ENCODE measurements at regions of chr17 and their contacts with region 1.

Region 1: GRCh38 chr17:2137342-2138098 is 82.6 kb downstream of the HIC1 start:
- DNase-seq: no peak
- ATAC-seq: peak; percentile 91
- H3K4me3 Mint-ChIP-seq: no peak overlapping the region
- H3K27ac Mint-ChIP-seq: peak overlapping the region; percentile 84
- H3K4me1 Mint-ChIP-seq: peaks cover 24% of the 10 kb centered on the region
- H3K27me3 Mint-ChIP-seq: no peaks in the 10 kb centered on the region
- CTCF ChIP-seq: no peak

Region 2: GRCh38 chr17:2064980-2065785 is 72.3 kb before region 1 on chr17:
- CTCF ChIA-PET with region 1: no interaction called
- POLR2A ChIA-PET with region 1: no interaction called
- intact Hi-C with region 1: loop called (anchors 2 kb)
- DNase-seq: no peak
- ATAC-seq: no peak
- H3K4me3 Mint-ChIP-seq: peak overlapping the region; percentile 67
- H3K27ac Mint-ChIP-seq: peak overlapping the region; percentile 16
- H3K4me1 Mint-ChIP-seq: peaks cover 46% of the 10 kb centered on the region
- H3K27me3 Mint-ChIP-seq: no peaks in the 10 kb centered on the region
- CTCF ChIP-seq: no peak

Region 3: DNA sequence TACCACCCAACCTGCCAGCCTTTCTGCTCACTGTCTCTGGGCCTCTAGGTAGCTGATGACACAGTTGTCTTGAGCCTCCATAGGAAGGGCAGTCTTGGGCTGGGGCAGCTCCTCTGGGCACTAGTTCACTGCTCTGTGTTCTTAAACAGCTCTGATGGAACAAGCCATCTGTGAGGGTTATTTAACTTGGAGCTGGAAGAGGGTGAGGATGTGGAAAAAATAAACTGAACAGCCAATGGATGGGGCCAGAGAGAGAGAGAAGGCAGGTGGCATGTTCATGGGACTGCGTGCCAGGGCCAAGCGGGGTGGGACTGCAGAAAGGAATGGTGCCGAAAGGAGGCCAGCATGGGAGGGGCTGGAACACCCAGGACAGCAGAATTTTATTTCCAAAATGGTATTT is 30.0 kb before region 1 on chr17:
- CTCF ChIA-PET with region 1: no interaction called
- POLR2A ChIA-PET with region 1: interaction called, 7 read pairs
- intact Hi-C with region 1: loop called (anchors 5 kb)
- DNase-seq: no peak
- ATAC-seq: no peak
- H3K4me3 Mint-ChIP-seq: no peak overlapping the region
- H3K27ac Mint-ChIP-seq: no peak overlapping the region
- H3K4me1 Mint-ChIP-seq: peaks cover 3% of the 10 kb centered on the region
- H3K27me3 Mint-ChIP-seq: no peaks in the 10 kb centered on the region
- CTCF ChIP-seq: no peak

Region 4: DNA sequence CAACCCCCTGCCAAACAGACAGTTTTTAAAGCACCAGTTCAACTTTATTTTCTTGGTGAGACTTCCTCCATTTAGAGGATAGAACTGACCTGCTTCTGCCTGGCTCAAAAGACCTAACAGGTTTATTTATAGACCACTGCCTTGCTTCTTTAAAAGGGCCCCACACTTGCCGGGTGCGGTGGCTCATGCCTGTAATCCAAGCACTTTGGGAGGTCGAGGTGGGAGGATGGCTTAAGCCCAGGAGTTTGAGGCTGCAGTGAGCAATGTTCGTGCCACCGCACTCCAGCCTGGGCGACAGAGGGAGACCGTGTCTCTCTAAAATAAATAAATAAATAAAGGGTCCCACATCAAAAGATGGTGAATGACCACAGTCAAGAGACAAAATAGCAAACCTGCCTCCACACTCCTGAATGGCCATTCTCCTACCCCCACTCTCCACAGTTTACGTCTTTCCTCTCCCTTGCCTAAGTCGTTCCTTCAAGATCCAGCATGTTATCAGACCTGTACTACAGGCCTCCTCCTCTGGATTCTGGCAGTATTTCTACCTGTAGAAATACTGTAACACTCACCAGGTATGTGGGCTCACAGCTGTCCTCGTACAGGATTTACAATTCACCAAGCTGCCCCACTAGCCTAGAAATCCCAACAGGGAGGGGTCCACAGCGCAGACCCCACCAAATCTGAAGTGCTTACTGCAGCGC is 70.4 kb after region 1 on chr17:
- CTCF ChIA-PET with region 1: no interaction called
- POLR2A ChIA-PET with region 1: no interaction called
- intact Hi-C with region 1: no loop called
- DNase-seq: no peak
- ATAC-seq: no peak
- H3K4me3 Mint-ChIP-seq: no peak overlapping the region
- H3K27ac Mint-ChIP-seq: no peak overlapping the region
- H3K4me1 Mint-ChIP-seq: no peaks in the 10 kb centered on the region
- H3K27me3 Mint-ChIP-seq: no peaks in the 10 kb centered on the region
- CTCF ChIP-seq: no peak